Heart left ventricle (tissue), 16 donors: ENCODE measurements at regions of chr1 and their contacts with region 1.

Region 1: GRCh38 chr1:98053471-98054366 is 132.9 kb upstream of the DPYD start:
- DNase-seq: peak; percentile 42 to 85 (median 56)
- ATAC-seq: peak; percentile 87 to 99 (median 96)
- H3K4me3 ChIP-seq: peak overlapping the region; percentile 15 to 65 (median 52)
- H3K27ac ChIP-seq: no peak overlapping the region
- H3K4me1 ChIP-seq: peaks cover 0 to 19% (median 11%) of the 10 kb centered on the region in 12 donors
- H3K27me3 ChIP-seq: peaks cover 5 to 72% (median 47%) of the 10 kb centered on the region in 9 donors
- CTCF ChIP-seq: peak; percentile 76 to 96 (median 92)
- POLR2A ChIP-seq: no peak

Region 2: GRCh38 chr1:96544831-96545221 is 1508.9 kb before region 1 on chr1:
- intact Hi-C with region 1: loop called in 1 of 10 experiments (anchors 10 kb)
- DNase-seq: no peak
- ATAC-seq: no peak
- H3K4me3 ChIP-seq: no peak overlapping the region
- H3K27ac ChIP-seq: no peak overlapping the region
- H3K4me1 ChIP-seq: peaks cover 0 to 2% (median 0%) of the 10 kb centered on the region in 12 donors
- H3K27me3 ChIP-seq: no peaks in the 10 kb centered on the region
- CTCF ChIP-seq: no peak
- POLR2A ChIP-seq: no peak

Region 3: GRCh38 chr1:96973605-96974004 is 1080.1 kb before region 1 on chr1:
- intact Hi-C with region 1: loop called in 7 of 10 experiments (anchors 5 kb)
- DNase-seq: peak in 3 of 5 donors; percentile 25 to 53 (median 44)
- ATAC-seq: peak in 1 of 4 donors; percentile 34
- H3K4me3 ChIP-seq: no peak overlapping the region
- H3K27ac ChIP-seq: no peak overlapping the region
- H3K4me1 ChIP-seq: no peaks in the 10 kb centered on the region
- H3K27me3 ChIP-seq: peaks cover 0 to 9% (median 0%) of the 10 kb centered on the region in 9 donors
- CTCF ChIP-seq: no peak
- POLR2A ChIP-seq: no peak

Region 4: GRCh38 chr1:97137862-97138514 is 915.7 kb before region 1 on chr1:
- intact Hi-C with region 1: loop called in 7 of 10 experiments (anchors 5 to 10 kb)
- DNase-seq: peak in 4 of 5 donors; percentile 22 to 33 (median 30)
- ATAC-seq: peak; percentile 78 to 97 (median 96)
- H3K4me3 ChIP-seq: peak overlapping the region in 8 of 12 donors; percentile 17 to 49 (median 36)
- H3K27ac ChIP-seq: peak overlapping the region in 2 of 12 donors; percentile 33 to 36
- H3K4me1 ChIP-seq: peaks cover 0 to 14% (median 8%) of the 10 kb centered on the region in 12 donors
- H3K27me3 ChIP-seq: no peaks in the 10 kb centered on the region
- CTCF ChIP-seq: peak; percentile 50 to 77 (median 66)
- POLR2A ChIP-seq: no peak

Region 5: GRCh38 chr1:97243973-97244560 is 809.7 kb before region 1 on chr1:
- intact Hi-C with region 1: loop called in 2 of 10 experiments (anchors 10 kb)
- DNase-seq: no peak
- ATAC-seq: no peak
- H3K4me3 ChIP-seq: no peak overlapping the region
- H3K27ac ChIP-seq: no peak overlapping the region
- H3K4me1 ChIP-seq: peaks cover 0 to 10% (median 0%) of the 10 kb centered on the region in 12 donors
- H3K27me3 ChIP-seq: no peaks in the 10 kb centered on the region
- CTCF ChIP-seq: peak; percentile 17 to 56 (median 42)
- POLR2A ChIP-seq: no peak

Region 6: DNA sequence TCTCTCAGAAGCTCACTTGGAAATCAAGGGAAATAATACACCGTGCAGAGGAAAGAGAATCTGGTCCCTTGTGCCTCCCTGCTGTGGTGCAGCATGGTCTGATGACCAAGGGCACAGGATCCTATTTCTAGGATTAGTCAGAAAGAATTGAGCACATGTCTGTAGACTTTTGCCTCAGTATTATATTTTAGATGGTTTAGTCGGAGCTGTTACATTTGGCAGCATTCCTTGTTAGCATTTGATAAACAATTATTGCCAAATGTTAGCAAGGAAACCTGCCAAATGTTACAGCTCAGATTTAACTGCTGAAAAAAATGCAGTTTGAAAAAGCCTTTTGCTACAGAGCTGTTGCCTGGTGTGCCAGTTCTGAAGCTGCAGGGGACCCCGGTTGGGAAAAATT is 50.6 kb after region 1 on chr1:
- intact Hi-C with region 1: no loop called
- DNase-seq: no peak
- ATAC-seq: no peak
- H3K4me3 ChIP-seq: no peak overlapping the region
- H3K27ac ChIP-seq: no peak overlapping the region
- H3K4me1 ChIP-seq: peaks cover 0 to 4% (median 0%) of the 10 kb centered on the region in 12 donors
- H3K27me3 ChIP-seq: peaks cover 0 to 8% (median 0%) of the 10 kb centered on the region in 9 donors
- CTCF ChIP-seq: no peak
- POLR2A ChIP-seq: no peak